PC-9 (cell line): ENCODE measurements at regions of chr14 and their contacts with region 1.

Region 1: DNA sequence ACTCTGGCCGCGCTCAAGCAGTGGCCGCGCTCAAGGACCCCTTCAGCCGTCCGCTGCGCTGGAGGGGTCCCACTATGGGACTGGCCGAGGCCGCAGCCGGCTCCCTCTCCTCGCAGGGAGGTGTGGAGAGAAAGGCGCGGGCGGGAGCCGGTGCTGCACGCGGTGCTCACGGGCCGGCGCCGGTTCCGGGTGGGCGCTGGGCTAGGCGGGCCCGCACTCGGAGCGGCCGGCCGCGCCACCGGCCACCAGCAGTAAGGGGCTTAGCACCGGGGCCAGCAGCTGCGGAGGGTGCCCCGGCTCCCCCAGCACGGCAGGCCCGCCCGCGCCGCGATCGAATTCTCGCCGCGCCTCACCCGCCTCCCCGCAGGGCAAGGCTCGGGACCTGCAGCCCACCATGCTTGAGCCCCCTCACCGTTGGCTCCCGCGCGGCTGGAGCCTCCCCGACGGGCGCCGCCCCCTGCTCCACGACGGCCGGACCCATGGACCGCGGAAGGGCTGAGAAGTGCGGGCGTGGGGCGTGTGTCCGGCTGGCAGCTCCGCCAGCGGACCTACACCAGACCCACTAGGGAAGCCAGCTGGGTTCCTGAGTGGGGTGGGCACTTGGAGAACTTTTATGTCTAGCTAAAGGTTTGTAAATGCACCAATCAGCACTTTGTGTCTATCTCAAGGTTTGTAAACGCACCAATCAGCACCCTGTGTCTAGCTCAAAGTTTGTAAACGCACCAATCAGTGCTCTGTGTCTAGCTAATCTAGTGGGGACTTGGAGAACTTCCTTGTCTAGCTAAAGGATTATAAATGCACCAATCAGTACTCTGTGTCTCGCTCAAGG is 49.5 kb downstream of the KLHL28 start:
- DNase-seq: no peak
- H3K4me3 ChIP-seq: no peak overlapping the region
- H3K27ac ChIP-seq: no peak overlapping the region
- H3K4me1 ChIP-seq: no peaks in the 10 kb centered on the region
- H3K27me3 ChIP-seq: no peaks in the 10 kb centered on the region
- CTCF ChIP-seq: no peak

Region 2: GRCh38 chr14:44732144-44732543 is 180.1 kb before region 1 on chr14:
- CTCF ChIA-PET with region 1: no interaction called
- POLR2A ChIA-PET with region 1: no interaction called
- intact Hi-C with region 1: no loop called
- DNase-seq: no peak
- H3K4me3 ChIP-seq: no peak overlapping the region
- H3K27ac ChIP-seq: no peak overlapping the region
- H3K4me1 ChIP-seq: no peaks in the 10 kb centered on the region
- H3K27me3 ChIP-seq: no peaks in the 10 kb centered on the region
- CTCF ChIP-seq: no peak

Region 3: GRCh38 chr14:45201905-45202304 is 289.6 kb after region 1 on chr14:
- CTCF ChIA-PET with region 1: no interaction called
- POLR2A ChIA-PET with region 1: no interaction called
- intact Hi-C with region 1: loop called (anchors 10 kb)
- DNase-seq: no peak
- H3K4me3 ChIP-seq: no peak overlapping the region
- H3K27ac ChIP-seq: no peak overlapping the region
- H3K4me1 ChIP-seq: no peaks in the 10 kb centered on the region
- H3K27me3 ChIP-seq: no peaks in the 10 kb centered on the region
- CTCF ChIP-seq: no peak

Region 4: GRCh38 chr14:45267071-45267470 is 354.8 kb after region 1 on chr14:
- CTCF ChIA-PET with region 1: interaction called, 23 read pairs
- POLR2A ChIA-PET with region 1: no interaction called
- intact Hi-C with region 1: loop called (anchors 1 kb)
- DNase-seq: no peak
- H3K4me3 ChIP-seq: no peak overlapping the region
- H3K27ac ChIP-seq: no peak overlapping the region
- H3K4me1 ChIP-seq: no peaks in the 10 kb centered on the region
- H3K27me3 ChIP-seq: no peaks in the 10 kb centered on the region
- CTCF ChIP-seq: no peak

Region 5: DNA sequence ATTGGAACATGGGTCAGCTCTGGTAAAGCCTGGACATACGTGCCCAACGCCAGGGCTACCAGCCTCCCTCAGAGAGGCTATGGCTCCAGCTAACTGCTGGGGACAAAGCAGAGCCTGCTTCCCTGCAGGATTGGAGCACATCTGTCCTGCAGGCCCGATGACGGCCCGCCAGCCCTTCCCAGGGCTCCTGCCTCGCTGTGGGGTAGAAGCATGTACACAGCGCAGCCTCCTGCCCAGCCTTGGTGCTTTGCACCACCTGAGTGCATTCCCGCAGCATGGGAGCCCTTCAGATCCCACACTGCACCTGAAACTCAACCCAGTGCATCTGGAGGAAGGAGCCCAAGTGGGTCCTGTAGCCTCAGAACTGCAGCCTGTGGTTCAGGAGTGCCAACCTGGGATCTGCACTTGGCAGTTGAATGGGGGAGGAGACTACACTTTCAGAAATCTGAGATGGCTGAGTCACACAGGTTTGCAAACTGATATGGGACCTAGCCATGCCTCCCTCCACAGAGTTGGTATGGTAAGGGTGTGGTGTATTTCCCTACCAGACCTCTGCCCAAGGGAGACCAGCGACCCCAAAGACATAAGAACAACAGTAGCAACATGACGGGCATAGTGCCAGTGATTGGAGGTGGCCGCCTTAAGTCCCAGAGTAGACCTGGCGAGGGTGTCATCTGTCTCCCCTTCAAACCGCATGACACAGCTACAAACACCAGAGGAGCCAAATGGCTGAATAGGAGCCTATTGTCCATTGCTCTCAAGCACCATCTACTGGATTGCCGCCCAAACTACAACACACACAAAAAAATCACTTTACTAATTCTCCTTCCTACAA is 614.7 kb after region 1 on chr14:
- CTCF ChIA-PET with region 1: no interaction called
- POLR2A ChIA-PET with region 1: no interaction called
- intact Hi-C with region 1: loop called (anchors 5 kb)
- DNase-seq: peak; percentile 56 to 58
- H3K4me3 ChIP-seq: no peak overlapping the region
- H3K27ac ChIP-seq: no peak overlapping the region
- H3K4me1 ChIP-seq: peaks cover 4% of the 10 kb centered on the region; the same call in 1 of the 2 replicates
- H3K27me3 ChIP-seq: no peaks in the 10 kb centered on the region
- CTCF ChIP-seq: peak; percentile 72